ENCODE measurements at regions of chr1 and their contacts with region 1.

Region 1: DNA sequence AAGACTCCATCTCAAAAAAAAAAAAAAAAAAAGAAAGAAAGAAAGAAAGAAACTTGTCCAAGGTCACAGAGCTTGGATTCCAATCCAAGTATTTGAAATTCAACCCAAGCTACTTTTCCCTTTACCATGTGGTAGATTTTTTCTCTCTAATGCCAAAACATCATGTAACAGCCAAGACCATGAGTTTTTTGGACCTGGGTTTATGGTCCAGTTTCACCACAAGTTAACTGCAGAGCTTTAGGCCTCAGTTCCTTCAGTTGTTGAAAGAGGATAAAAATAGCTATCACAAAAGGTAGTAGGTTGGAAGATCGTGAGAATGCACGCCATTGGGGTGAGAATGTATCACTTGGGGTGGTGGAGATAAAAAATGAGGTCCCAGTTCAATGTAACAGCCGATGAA is 33.4 kb downstream of the ATP2B4 start:
- DNase-seq: no peak
- ATAC-seq: no peak
- H3K4me3 ChIP-seq: no peak overlapping the region
- H3K4me3 Mint-ChIP-seq: no peak overlapping the region
- H3K27ac ChIP-seq: no peak overlapping the region
- H3K27ac Mint-ChIP-seq: no peak overlapping the region
- H3K4me1 ChIP-seq: no peaks in the 10 kb centered on the region
- H3K4me1 Mint-ChIP-seq: no peaks in the 10 kb centered on the region
- H3K27me3 ChIP-seq: no peaks in the 10 kb centered on the region
- H3K27me3 Mint-ChIP-seq: no peaks in the 10 kb centered on the region
- CTCF ChIP-seq: no peak

Region 2: DNA sequence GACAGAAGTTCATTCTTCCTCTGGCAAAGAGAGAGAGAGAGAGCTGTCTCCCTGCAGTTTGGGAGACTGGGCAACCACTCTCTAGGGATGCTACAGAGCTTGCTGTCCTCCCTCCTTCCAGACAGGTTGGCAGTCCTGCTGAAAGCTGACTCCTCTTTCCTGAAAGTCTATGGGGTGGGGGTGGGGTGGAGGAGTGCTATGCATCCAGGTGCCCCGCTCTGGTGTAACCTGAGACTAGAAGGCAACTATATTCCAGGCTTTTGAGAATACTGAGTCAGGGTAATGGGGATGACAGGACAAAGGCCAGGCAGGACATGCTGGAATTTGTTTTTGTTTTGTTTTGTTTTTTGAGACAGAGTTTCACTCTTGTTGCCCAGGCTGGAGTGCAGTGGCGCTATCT is 110.8 kb before region 1 on chr1:
- CTCF ChIA-PET with region 1: no interaction called
- POLR2A ChIA-PET with region 1: interaction called, 10 read pairs
- intact Hi-C with region 1: no loop called
- DNase-seq: no peak
- ATAC-seq: no peak
- H3K4me3 ChIP-seq: no peak overlapping the region
- H3K4me3 Mint-ChIP-seq: no peak overlapping the region
- H3K27ac ChIP-seq: no peak overlapping the region
- H3K27ac Mint-ChIP-seq: no peak overlapping the region
- H3K4me1 ChIP-seq: no peaks in the 10 kb centered on the region
- H3K4me1 Mint-ChIP-seq: no peaks in the 10 kb centered on the region
- H3K27me3 ChIP-seq: peaks cover 0 to 7% (median 0%) of the 10 kb centered on the region in 4 experiments
- H3K27me3 Mint-ChIP-seq: peaks cover 31% of the 10 kb centered on the region
- CTCF ChIP-seq: no peak

Region 3: DNA sequence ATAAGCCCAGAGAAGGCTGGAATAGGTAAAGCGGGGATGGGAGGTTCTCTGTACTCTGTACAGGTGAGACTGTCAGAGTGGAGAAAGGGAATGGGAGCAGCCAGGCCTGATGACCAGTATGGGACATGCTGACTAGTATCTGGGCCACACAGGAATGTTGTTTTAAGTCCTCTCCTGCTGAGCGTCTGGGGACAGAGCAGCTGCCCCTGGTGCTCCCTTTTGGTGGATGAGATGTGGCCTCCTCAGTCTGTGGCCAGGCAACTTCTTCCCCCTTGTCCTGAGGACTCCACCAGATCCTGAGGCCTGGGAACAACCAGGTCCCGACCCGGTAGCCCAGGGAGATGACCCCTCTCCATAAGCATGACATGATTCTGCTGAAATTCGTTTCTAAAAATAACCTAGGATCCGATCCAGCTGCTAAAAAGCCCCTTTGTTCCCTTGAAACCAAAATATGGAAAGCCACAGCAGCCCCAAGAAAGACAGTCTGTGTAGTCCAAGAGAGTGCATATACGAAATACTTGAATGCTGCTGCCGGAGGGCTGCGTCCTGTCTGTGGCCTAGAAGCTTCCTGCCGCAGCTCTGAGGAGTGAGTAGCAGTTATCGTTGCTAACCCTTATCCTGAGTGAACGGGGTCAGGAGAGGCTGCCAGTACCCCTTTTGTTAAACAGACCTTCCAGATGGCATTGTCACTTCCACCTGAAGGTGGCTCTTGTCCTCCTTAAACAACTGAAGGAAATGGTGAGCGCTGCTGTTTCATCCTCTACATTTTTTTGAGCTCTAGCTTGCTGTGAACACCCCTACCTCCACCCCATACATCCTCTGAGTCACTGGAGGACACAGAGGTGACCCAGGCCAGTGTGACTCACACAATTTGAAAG is 13.7 kb after region 1 on chr1:
- CTCF ChIA-PET with region 1: no interaction called
- POLR2A ChIA-PET with region 1: no interaction called
- intact Hi-C with region 1: no loop called
- DNase-seq: peak; percentile 61
- ATAC-seq: peak; percentile 73
- H3K4me3 ChIP-seq: no peak overlapping the region
- H3K4me3 Mint-ChIP-seq: no peak overlapping the region
- H3K27ac ChIP-seq: no peak overlapping the region
- H3K27ac Mint-ChIP-seq: peak overlapping the region; percentile 58
- H3K4me1 ChIP-seq: peaks cover 14 to 20% of the 10 kb centered on the region in 2 donors
- H3K4me1 Mint-ChIP-seq: peaks cover 22% of the 10 kb centered on the region
- H3K27me3 ChIP-seq: no peaks in the 10 kb centered on the region
- H3K27me3 Mint-ChIP-seq: no peaks in the 10 kb centered on the region
- CTCF ChIP-seq: no peak